Right cardiac atrium (tissue), 5 donors: ENCODE measurements at regions of chr19 and their contacts with region 1.

Region 1: GRCh38 chr19:35931161-35931873 is 4.9 kb upstream of the LRFN3 start:
- DNase-seq: peak; percentile 99 to 100 (median 100)
- ATAC-seq: peak; percentile 99
- H3K4me3 ChIP-seq: no peak overlapping the region
- H3K27ac ChIP-seq: no peak overlapping the region
- H3K4me1 ChIP-seq: peaks cover 3% of the 10 kb centered on the region
- H3K27me3 ChIP-seq: no peaks in the 10 kb centered on the region

Region 2: DNA sequence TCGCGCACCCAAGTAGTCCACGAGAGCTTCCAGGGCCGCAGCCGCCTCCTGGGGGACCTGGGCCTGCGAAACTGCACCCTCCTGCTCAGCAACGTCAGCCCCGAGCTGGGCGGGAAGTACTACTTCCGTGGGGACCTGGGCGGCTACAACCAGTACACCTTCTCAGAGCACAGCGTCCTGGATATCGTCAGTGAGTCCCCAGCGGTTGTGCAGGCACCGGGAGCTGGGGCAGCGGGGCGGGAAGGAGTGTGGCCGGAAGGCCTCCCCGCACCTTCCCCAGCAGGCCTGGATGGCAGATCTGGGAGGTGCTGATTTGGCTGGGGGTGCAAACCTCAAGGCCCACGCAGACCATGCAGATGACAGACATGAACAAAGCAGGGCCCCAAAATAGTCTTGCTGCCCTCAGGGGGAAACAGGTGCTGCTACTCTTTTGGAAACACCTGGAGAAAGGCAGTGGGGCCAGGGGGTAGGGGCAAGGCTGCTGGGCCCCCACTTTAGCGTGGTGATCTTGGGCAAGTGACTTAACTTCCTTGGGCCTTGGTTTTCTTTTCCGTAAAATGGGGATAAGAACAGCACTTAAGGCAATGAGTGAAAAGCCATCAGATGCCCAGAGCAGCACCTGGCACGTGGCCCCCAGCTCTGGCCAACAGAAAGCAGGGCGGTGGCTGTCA is 635.4 kb before region 1 on chr19:
- intact Hi-C with region 1: no loop called
- DNase-seq: no peak
- ATAC-seq: no peak
- H3K4me3 ChIP-seq: no peak overlapping the region
- H3K27ac ChIP-seq: no peak overlapping the region
- H3K4me1 ChIP-seq: no peaks in the 10 kb centered on the region
- H3K27me3 ChIP-seq: no peaks in the 10 kb centered on the region

Region 3: DNA sequence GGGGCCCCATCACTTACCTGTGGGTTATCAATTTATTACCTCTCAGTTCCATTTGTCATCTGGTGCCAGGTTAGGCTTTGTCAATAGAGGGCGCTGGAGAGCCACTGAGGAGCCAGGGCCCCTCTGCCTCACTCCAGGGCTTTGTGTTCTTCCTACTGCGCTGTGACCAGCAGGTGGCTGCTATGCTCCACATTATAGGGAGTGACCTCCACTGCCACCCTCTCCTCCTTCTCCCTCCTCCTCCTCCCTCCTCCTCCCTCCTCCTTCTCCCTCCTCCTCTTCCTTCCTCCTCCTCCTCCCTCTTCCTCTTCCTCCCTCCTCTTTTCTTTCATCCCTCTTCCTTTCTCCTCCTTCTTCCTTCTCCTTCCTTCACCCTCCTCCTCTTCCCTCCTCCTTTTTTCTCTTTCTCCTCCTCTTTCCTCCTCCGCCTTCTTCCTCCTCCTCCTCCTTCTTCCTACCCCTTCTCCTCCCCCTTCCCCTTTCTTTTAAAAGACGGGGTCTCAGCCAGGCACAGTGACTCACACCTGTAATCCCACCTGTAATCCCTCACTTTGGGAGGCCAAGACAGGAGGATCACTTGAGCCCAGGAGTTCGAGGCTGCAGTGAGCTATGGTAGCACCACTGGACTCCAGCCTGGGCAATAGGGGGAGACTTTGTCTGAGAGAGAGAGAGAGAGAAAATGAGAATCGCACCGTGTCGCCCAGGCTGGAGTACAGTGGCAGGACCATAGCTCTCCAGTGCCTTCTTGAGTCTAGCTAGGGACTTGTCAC is 237.3 kb before region 1 on chr19:
- intact Hi-C with region 1: loop called in 2 of 4 experiments (anchors 10 kb)
- DNase-seq: peak; percentile 88 to 94 (median 91)
- ATAC-seq: peak; percentile 99
- H3K4me3 ChIP-seq: no peak overlapping the region
- H3K27ac ChIP-seq: no peak overlapping the region
- H3K4me1 ChIP-seq: no peaks in the 10 kb centered on the region
- H3K27me3 ChIP-seq: no peaks in the 10 kb centered on the region

Region 4: GRCh38 chr19:35757749-35758608 is 173.3 kb before region 1 on chr19 and contains the start of gene PROSER3:
- intact Hi-C with region 1: loop called in 1 of 4 experiments (anchors 10 kb)
- DNase-seq: peak; percentile 97 to 99 (median 99)
- ATAC-seq: peak; percentile 87 to 88
- H3K4me3 ChIP-seq: peak within 1 kb of the TSS; percentile 60
- H3K27ac ChIP-seq: peak within 1 kb of the TSS; percentile 97
- H3K4me1 ChIP-seq: peaks cover 2% of the 10 kb centered on the region
- H3K27me3 ChIP-seq: no peaks in the 10 kb centered on the region
- total RNA-seq, gene PROSER3: 5.6 to 10.3 (median 7.4) TPM

Region 5: DNA sequence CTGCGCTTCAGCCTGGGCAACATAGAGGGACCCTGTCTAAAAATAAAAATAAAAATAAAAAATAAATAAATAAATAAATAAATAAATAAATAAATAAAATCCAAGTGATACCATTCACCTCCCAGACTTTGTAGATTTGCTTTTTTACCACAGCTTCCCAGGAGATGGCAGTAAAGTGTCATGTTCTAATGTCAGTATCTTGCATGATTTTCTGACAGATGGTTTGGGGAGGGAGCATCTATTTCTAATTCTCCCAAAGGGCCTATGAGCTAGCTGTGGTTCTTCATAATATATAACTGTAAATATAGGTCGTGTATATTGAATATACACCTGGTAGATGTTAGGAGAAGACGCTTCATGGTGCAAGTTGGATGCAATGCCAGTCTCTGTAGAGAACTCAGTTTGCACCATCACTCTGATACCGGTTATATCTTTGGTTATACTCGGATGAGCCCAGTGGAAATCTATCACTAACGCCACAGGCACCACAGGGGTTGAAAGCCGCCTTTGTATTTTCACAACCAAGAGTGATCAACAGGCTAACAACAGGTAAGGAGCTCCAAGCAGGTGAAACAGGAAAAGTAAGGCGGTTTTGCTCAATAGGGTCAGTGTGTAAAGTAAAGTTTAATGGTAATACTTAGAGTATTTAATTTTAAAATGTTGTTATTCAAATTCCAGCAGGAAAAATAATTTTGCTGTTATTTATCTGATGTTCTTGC is 49.0 kb before region 1 on chr19:
- intact Hi-C with region 1: loop called in 3 of 4 experiments (anchors 5 to 10 kb)
- DNase-seq: no peak
- ATAC-seq: no peak
- H3K4me3 ChIP-seq: no peak overlapping the region
- H3K27ac ChIP-seq: no peak overlapping the region
- H3K4me1 ChIP-seq: no peaks in the 10 kb centered on the region
- H3K27me3 ChIP-seq: no peaks in the 10 kb centered on the region

Region 6: GRCh38 chr19:35899547-35900214 is 31.6 kb before region 1 on chr19:
- intact Hi-C with region 1: loop called in 1 of 4 experiments (anchors 5 kb)
- DNase-seq: peak; percentile 82 to 93 (median 93)
- ATAC-seq: peak; percentile 89
- H3K4me3 ChIP-seq: peak overlapping the region; percentile 76
- H3K27ac ChIP-seq: peak overlapping the region; percentile 50
- H3K4me1 ChIP-seq: no peaks in the 10 kb centered on the region
- H3K27me3 ChIP-seq: no peaks in the 10 kb centered on the region